ENCODE measurements at regions of chr5 and their contacts with region 1.

Region 1: GRCh38 chr5:53378590-53379247 is 101.7 kb upstream of the FST start:
- DNase-seq: no peak
- H3K4me3 ChIP-seq: no peak overlapping the region
- H3K27ac ChIP-seq: no peak overlapping the region
- H3K4me1 ChIP-seq: no peaks in the 10 kb centered on the region
- H3K27me3 ChIP-seq: no peaks in the 10 kb centered on the region
- CTCF ChIP-seq: no peak
- POLR2A ChIP-seq: no peak

Region 2: DNA sequence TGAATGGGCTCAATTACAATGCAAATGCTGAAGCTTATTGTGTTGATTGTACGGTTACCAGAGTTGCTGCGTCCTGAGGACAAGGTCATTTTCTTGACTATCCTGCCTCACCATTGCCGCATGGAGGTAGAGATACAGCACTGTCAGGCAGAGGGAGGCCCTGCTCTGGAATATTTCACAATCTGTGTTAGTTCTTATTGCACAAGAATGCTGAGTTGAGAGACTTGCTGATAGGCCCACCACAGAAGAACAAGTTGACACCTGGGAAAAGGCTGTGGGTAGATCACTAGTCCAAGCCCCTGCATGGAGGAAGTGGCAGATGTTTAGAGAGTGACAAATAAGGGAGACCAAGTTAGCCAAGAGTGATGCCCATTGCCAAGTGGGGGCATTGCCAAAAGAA is 935.5 kb before region 1 on chr5:
- intact Hi-C with region 1: loop called (anchors 10 kb)
- DNase-seq: no peak
- H3K4me3 ChIP-seq: no peak overlapping the region
- H3K27ac ChIP-seq: no peak overlapping the region
- H3K4me1 ChIP-seq: no peaks in the 10 kb centered on the region
- H3K27me3 ChIP-seq: no peaks in the 10 kb centered on the region
- CTCF ChIP-seq: no peak
- POLR2A ChIP-seq: no peak